ENCODE measurements at regions of chr17 and their contacts with region 1.

Region 1: GRCh38 chr17:77494664-77495435 is 354.1 kb downstream of the SEC14L1 start:
- DNase-seq: peak; percentile 88
- CTCF ChIP-seq: peak; percentile 87

Region 2: GRCh38 chr17:77319211-77320043 is 175.4 kb before region 1 on chr17:
- in situ Hi-C with region 1: loop called (anchors 10 kb)
- DNase-seq: peak; percentile 78
- CTCF ChIP-seq: no peak

Region 3: GRCh38 chr17:77429919-77430752 is 64.7 kb before region 1 on chr17:
- in situ Hi-C with region 1: loop called (anchors 10 kb)
- DNase-seq: peak; percentile 82
- CTCF ChIP-seq: peak; percentile 94

Region 4: DNA sequence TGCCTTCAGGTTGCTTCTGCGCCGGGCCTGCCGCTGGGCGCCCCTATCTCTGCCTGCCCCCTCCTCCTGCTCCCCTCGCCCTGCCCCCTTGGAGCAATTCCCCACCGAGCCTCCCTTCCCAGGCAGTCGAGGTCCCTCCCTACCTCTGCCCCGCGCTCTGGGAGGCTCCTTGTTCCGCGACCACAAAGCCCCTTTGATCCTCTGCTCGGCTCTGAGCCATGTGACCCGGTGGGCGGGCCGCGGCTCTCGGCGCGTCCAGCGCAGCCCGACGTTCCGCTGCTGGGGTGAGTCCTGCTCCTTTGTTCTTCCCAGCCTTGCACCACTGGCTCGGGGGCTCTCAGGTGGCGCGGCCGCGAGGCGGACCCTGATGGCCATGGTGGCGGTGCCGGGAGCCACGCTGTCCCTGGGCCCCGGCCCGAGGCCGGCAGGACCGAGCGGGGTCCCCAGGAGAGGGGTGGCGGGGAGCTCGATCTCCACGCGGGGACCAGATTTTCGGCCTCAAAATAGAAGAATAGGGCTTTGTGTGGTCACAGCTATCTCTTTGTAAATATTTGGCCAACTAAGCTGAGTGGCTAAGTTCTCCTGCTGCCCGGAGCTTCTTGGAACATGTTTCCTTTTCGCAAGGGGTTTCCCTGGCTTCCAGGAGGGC is 43.5 kb before region 1 on chr17:
- in situ Hi-C with region 1: no loop called
- DNase-seq: peak; percentile 74
- CTCF ChIP-seq: no peak

Region 5: GRCh38 chr17:77542551-77543490 is 48.0 kb after region 1 on chr17:
- in situ Hi-C with region 1: no loop called
- DNase-seq: peak; percentile 82
- CTCF ChIP-seq: peak; percentile 87

Region 6: DNA sequence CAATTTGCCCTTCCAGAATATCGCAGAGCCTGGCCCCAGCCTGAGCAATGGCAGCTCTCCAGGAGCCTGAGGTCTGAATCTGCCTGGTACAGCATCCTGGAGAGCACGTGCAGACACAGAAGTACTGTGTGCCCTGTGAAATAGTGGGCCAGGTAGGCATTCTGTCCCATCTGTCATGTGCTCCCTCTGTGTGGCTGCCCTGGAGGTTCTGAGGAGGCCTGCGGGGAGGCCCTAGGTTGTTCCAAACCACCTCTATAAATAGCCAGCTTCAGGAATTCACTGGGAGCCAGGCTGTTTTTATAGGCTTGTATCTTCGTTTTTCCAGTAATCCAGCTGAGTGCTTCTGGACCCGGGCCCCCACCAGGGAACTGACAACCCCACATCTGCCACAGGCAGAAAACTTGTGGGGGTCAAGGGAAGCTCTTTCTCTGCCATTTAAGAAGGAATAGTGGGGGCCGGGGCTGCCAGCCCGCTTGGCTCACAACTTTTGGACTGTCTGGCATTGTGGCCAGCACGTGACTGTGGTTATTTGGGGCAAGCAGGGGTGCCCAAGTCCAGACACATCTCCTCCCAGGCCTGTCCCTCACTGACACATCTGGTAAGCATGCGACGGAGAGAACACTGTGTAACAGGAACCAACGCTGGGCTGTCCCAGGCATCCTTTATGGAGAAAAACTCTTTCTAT is 107.4 kb after region 1 on chr17:
- in situ Hi-C with region 1: no loop called
- DNase-seq: no peak
- CTCF ChIP-seq: no peak

Measured in GM13977 (cell line).